IMR-90 (cell line): ENCODE measurements at regions of chr10 and their contacts with region 1.

Region 1: GRCh38 chr10:69800109-69800508 is 1.6 kb upstream of the COL13A1 start:
- DNase-seq: peak; percentile 75
- ATAC-seq: peak; percentile 48
- H3K4me3 ChIP-seq: no peak overlapping the region
- H3K27ac ChIP-seq: no peak overlapping the region
- H3K4me1 ChIP-seq: peaks cover 12% of the 10 kb centered on the region
- H3K27me3 ChIP-seq: peaks cover 3% of the 10 kb centered on the region; the same call in 1 of the 2 replicates
- CTCF ChIP-seq: peak; percentile 86
- POLR2A ChIP-seq: no peak
- RAD21 ChIP-seq: peak; percentile 73

Region 2: DNA sequence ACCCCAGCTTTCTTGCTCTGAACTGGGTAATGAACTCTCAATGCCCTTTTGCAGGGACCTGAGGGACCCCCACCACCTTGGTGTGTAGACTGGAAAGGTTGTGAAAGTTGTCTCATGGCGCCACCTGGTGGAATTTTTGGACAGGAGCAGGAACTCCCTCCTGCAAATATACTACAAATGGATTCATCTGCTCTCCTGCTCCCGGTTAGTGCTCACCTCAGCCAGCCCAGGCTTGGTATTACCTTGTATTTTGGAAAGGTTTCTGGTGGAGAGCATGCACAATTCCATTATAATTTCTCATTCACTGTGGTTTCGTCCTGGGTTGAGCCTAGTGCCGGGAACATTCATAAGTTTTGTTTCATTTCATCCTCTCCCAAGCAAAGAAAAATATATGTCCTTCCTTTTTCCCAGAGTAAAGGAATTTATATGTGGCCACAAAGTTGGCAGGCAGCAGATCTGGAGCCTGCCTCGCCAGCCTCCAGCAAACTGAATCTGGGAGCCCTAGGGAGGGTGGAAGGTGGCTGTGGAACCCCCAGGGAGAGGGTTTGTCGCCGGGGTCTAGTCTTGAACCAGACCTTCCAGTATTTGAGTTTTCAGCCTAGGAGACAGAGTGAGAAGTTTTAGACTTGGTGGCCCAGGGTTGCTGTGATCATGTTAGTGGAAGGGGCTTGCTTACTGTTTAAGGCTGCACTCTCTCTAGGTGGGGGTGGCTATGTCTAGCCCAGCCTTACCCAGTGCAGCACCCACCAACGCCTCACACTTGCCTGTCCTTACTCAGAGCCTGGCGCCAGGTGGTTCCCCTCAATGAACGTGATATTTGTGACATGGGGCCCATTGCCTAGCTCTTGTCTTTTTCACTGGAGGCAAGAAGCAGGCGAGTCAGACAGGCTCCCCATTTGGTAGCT is 160.6 kb before region 1 on chr10:
- CTCF ChIA-PET with region 1: interaction called, 4 read pairs
- POLR2A ChIA-PET with region 1: no interaction called
- dilution Hi-C with region 1: no loop called
- in situ Hi-C with region 1: loop called (anchors 10 kb)
- intact Hi-C with region 1: loop called (anchors 1 kb)
- DNase-seq: peak; percentile 56
- ATAC-seq: peak; percentile 87
- H3K4me3 ChIP-seq: no peak overlapping the region
- H3K27ac ChIP-seq: no peak overlapping the region
- H3K4me1 ChIP-seq: no peaks in the 10 kb centered on the region; the same call in 1 of the 2 replicates
- H3K27me3 ChIP-seq: peaks cover 72% of the 10 kb centered on the region
- CTCF ChIP-seq: peak; percentile 81
- POLR2A ChIP-seq: no peak
- RAD21 ChIP-seq: peak; percentile 78

Region 3: GRCh38 chr10:69696073-69696731 is 103.9 kb before region 1 on chr10:
- CTCF ChIA-PET with region 1: interaction called, 6 read pairs
- POLR2A ChIA-PET with region 1: no interaction called
- dilution Hi-C with region 1: no loop called
- in situ Hi-C with region 1: no loop called
- intact Hi-C with region 1: loop called (anchors 1 kb)
- DNase-seq: peak; percentile 91
- ATAC-seq: peak; percentile 96
- H3K4me3 ChIP-seq: no peak overlapping the region
- H3K27ac ChIP-seq: no peak overlapping the region
- H3K4me1 ChIP-seq: no peaks in the 10 kb centered on the region
- H3K27me3 ChIP-seq: peaks cover 7% of the 10 kb centered on the region
- CTCF ChIP-seq: peak; percentile 73
- POLR2A ChIP-seq: no peak
- RAD21 ChIP-seq: peak; percentile 60

Region 4: DNA sequence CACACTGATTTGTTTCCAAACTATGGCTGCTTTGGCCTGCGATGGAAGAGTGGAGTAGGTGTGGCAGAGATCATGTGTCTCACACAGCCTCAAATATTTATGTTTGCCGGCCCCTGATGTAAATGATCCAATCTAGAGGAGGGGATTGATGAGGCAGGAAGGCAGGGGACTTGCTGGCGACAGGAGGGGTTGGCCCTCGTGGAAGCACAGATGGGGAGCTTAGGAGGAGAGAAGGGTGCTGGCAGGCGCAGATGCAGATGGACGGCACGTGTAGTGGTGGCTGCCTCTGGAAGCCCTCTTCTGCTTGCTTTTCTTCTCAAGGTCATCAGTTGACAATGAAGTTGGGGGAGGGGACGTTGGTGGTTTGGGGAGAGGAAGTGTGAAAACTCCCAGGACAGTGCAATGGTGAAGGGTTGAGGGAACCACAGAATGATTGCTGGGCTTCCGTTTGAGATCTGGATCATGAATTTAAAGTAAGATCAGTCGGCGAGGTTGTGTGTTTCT is 17.0 kb after region 1 on chr10:
- CTCF ChIA-PET with region 1: no interaction called
- POLR2A ChIA-PET with region 1: no interaction called
- dilution Hi-C with region 1: no loop called
- in situ Hi-C with region 1: no loop called
- intact Hi-C with region 1: no loop called
- DNase-seq: no peak
- ATAC-seq: peak; percentile 77
- H3K4me3 ChIP-seq: no peak overlapping the region
- H3K27ac ChIP-seq: no peak overlapping the region; the same call in 1 of the 2 replicates
- H3K4me1 ChIP-seq: peaks cover 20% of the 10 kb centered on the region
- H3K27me3 ChIP-seq: no peaks in the 10 kb centered on the region
- CTCF ChIP-seq: no peak
- POLR2A ChIP-seq: no peak
- RAD21 ChIP-seq: no peak

Region 5: GRCh38 chr10:69866688-69867461 is 66.8 kb after region 1 on chr10:
- CTCF ChIA-PET with region 1: no interaction called
- POLR2A ChIA-PET with region 1: no interaction called
- dilution Hi-C with region 1: no loop called
- in situ Hi-C with region 1: no loop called
- intact Hi-C with region 1: loop called (anchors 5 kb)
- DNase-seq: peak; percentile 84
- ATAC-seq: peak; percentile 84
- H3K4me3 ChIP-seq: peak overlapping the region; percentile 13; the same call in 1 of the 2 replicates
- H3K27ac ChIP-seq: peak overlapping the region; percentile 70
- H3K4me1 ChIP-seq: peaks cover 33% of the 10 kb centered on the region
- H3K27me3 ChIP-seq: no peaks in the 10 kb centered on the region
- CTCF ChIP-seq: no peak
- POLR2A ChIP-seq: no peak
- RAD21 ChIP-seq: 0 out of 2 replicates have a peak, but pooled peaks have one; percentile 10

Region 6: GRCh38 chr10:70146489-70147258 is 346.6 kb after region 1 on chr10 and contains the start of gene TYSND1:
- CTCF ChIA-PET with region 1: no interaction called
- POLR2A ChIA-PET with region 1: no interaction called
- dilution Hi-C with region 1: no loop called
- in situ Hi-C with region 1: no loop called
- intact Hi-C with region 1: loop called (anchors 10 kb)
- DNase-seq: peak; percentile 98
- ATAC-seq: peak; percentile 92
- H3K4me3 ChIP-seq: peak within 1 kb of the TSS; percentile 49
- H3K27ac ChIP-seq: peak within 1 kb of the TSS; percentile 76
- H3K4me1 ChIP-seq: peaks cover 11% of the 10 kb centered on the region
- H3K27me3 ChIP-seq: no peaks in the 10 kb centered on the region
- CTCF ChIP-seq: peak; percentile 85
- POLR2A ChIP-seq: peak; percentile 94
- RAD21 ChIP-seq: peak; percentile 63
- total RNA-seq, gene TYSND1: 2.8 and 2.9 TPM in 2 replicates